CD4-positive, alpha-beta T cell (primary cell): ENCODE measurements at regions of chr1 and their contacts with region 1.

Region 1: DNA sequence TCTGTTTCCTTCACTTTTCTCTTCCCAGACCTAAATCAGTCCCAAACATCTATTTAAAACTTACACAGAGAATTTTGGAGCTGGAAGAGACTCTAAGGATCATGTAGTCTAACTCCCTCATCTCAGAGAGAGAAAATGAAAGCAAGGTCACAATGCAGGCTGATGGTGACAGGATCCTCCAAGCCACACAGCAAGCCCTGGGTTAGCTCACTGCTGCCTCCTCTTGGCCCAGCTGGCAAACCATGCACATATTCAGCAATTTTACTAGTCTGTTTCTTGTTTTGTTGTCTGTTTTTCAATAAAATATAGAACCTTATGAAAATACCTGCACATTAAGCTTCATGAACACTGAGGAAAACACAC is 27.7 kb upstream of the LY9 start:
- DNase-seq: peak; percentile 77 to 93 (median 82)
- ATAC-seq: peak; percentile 95
- H3K4me3 ChIP-seq: peak overlapping the region; percentile 34
- H3K4me3 Mint-ChIP-seq: peak overlapping the region; percentile 72
- H3K27ac ChIP-seq: peak overlapping the region; percentile 56 to 57
- H3K27ac Mint-ChIP-seq: peak overlapping the region; percentile 93
- H3K4me1 ChIP-seq: peaks cover 23% of the 10 kb centered on the region
- H3K4me1 Mint-ChIP-seq: peaks cover 21% of the 10 kb centered on the region
- H3K27me3 ChIP-seq: no peaks in the 10 kb centered on the region
- H3K27me3 Mint-ChIP-seq: no peaks in the 10 kb centered on the region
- CTCF ChIP-seq: peak; percentile 78

Region 2: DNA sequence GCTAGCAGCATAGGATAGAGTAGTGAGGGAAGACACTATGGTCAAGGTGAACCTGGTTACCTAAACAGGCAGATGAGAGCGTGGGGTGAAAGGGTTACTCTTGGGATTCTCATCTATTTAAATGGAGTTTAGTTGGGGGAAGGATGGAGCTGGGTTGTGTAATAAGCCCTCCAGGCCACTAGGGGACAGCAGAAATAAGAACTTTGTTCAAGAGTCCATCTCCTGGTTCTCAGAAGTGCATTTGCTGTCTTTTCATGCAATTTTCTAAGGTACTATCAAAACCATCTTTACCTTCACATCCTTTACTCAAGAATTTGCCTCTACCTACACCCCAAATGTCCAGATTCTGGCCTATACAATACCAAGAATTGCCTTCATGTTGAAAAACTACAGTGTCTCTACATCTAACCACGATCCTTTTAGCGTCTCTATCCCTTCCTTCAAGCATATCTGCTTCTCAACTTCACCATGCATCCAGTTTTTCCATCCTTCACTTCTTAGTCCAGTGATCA is 149.5 kb before region 1 on chr1:
- CTCF ChIA-PET with region 1: no interaction called
- POLR2A ChIA-PET with region 1: no interaction called
- intact Hi-C with region 1: loop called (anchors 5 kb)
- DNase-seq: peak in 8 of 14 experiments; percentile 19 to 79 (median 44)
- ATAC-seq: peak; percentile 67
- H3K4me3 ChIP-seq: no peak overlapping the region
- H3K4me3 Mint-ChIP-seq: no peak overlapping the region
- H3K27ac ChIP-seq: no peak overlapping the region
- H3K27ac Mint-ChIP-seq: peak overlapping the region; percentile 42
- H3K4me1 ChIP-seq: peaks cover 44% of the 10 kb centered on the region
- H3K4me1 Mint-ChIP-seq: peaks cover 84% of the 10 kb centered on the region
- H3K27me3 ChIP-seq: no peaks in the 10 kb centered on the region
- H3K27me3 Mint-ChIP-seq: no peaks in the 10 kb centered on the region
- CTCF ChIP-seq: peak; percentile 80

Region 3: DNA sequence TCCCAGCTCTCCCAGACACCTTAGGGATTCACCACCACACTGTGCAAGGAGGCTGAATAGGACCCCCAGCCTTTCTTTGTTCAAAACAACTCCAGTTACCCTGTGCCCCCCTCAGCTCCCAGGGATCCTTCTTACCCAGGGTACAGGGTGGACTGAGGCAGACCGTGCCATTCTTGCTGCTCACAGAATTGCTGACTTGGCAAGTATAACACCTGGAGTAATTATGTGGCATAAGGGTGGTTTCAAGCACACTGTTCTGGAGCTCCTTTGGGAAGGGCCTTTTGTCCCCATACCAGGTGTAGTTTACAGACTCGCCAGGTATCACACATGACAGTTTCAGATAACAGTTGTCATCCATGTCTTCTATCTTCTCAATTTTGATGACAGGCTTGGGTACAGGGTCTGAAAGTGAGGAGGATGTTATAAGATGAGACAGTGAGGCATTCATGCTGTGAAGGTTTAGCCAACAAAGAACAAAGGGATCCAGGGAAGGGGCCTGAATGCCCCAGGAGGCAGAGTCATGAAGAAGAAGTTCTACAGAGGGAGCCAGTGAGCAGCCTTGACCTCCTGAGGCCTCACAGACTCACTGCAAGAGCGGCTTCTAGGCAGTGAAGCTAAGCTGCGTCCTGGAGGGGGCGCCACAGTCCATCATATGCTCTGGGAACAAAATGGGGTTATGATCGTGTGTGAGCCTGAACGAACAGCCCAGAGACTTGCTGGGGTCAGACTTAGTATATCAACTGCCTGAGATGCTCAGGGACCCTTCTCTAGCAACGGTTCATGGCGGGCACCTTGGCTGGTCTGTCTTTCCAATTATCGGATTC is 87.0 kb before region 1 on chr1:
- CTCF ChIA-PET with region 1: interaction called, 56 read pairs
- POLR2A ChIA-PET with region 1: interaction called, 18 read pairs
- intact Hi-C with region 1: loop called (anchors 1 kb)
- DNase-seq: peak; percentile 83 to 95 (median 88)
- ATAC-seq: peak; percentile 93
- H3K4me3 ChIP-seq: no peak overlapping the region
- H3K4me3 Mint-ChIP-seq: peak overlapping the region; percentile 2
- H3K27ac ChIP-seq: peak overlapping the region; percentile 43 to 53
- H3K27ac Mint-ChIP-seq: peak overlapping the region; percentile 80
- H3K4me1 ChIP-seq: peaks cover 56% of the 10 kb centered on the region
- H3K4me1 Mint-ChIP-seq: peaks cover 52% of the 10 kb centered on the region
- H3K27me3 ChIP-seq: no peaks in the 10 kb centered on the region
- H3K27me3 Mint-ChIP-seq: no peaks in the 10 kb centered on the region
- CTCF ChIP-seq: peak; percentile 82

Region 4: DNA sequence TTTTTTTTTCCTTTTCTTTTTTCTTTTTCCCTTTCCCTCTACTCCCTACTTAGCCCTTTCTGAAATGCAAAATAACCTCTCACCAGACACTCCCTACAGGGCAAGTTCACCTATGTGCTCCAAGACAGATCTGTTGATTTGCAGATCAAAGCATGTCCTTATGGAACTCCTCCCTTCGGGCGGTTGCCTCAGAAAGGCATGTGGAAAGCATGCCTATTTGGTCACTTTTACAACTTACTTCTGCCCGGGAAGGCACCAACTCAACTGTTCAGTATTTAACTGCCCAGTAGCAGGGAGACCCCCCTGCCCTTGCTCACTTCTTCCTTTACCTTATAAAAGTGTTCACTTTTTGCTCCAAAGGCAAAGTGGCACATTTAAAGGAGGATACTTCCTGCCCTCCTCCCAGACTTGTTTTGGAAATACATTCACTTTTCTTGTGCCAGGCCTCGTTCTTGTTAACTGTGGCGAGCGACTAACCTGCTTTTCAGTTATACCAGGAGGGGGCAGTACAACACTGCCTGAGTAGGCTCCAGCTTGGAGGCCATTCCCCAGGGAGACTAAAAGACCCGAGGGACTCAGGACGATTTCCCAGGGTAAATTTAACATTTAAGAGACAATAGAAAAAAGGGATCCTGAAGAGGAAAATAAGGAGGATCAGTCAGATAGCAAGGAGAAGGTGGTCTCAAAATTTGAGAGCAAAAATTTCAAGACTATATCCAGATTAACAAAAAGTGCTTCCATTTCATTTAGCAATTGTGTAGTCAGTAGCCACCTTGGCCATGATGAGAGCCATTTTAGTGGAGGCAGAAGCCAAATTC is 41.6 kb before region 1 on chr1:
- CTCF ChIA-PET with region 1: interaction called, 43 read pairs
- POLR2A ChIA-PET with region 1: interaction called, 5 read pairs
- intact Hi-C with region 1: loop called (anchors 1 to 2 kb)
- DNase-seq: peak; percentile 24 to 87 (median 52)
- ATAC-seq: peak; percentile 89
- H3K4me3 ChIP-seq: no peak overlapping the region
- H3K4me3 Mint-ChIP-seq: no peak overlapping the region
- H3K27ac ChIP-seq: no peak overlapping the region
- H3K27ac Mint-ChIP-seq: no peak overlapping the region
- H3K4me1 ChIP-seq: peaks cover 16% of the 10 kb centered on the region
- H3K4me1 Mint-ChIP-seq: peaks cover 14% of the 10 kb centered on the region
- H3K27me3 ChIP-seq: no peaks in the 10 kb centered on the region
- H3K27me3 Mint-ChIP-seq: no peaks in the 10 kb centered on the region
- CTCF ChIP-seq: peak; percentile 94

Region 5: DNA sequence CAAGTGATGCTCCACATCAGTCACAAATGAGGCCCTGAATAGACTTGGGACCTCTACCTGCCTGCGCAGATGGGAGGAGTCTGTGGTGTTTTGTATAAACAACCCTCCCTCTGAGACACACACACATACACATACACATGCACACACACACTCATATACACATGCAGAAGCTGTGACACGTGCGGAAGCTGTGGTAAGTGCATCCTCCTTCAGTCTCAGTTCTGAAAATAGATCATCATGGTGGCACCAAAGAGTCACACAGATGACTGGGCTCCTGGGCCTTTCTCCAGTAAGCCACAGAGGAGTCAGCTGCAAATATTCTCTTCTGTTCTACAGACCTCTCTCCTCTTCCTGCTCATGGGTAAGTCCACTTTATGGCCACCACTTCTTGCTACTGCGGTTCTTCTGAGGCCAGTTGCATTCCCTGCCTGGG is 27.7 kb after region 1 on chr1 and contains the start of gene LY9:
- CTCF ChIA-PET with region 1: interaction called, 5 read pairs
- POLR2A ChIA-PET with region 1: interaction called, 21 read pairs
- intact Hi-C with region 1: no loop called
- DNase-seq: peak; percentile 64 to 97 (median 72)
- ATAC-seq: peak; percentile 88
- H3K4me3 ChIP-seq: peak within 1 kb of the TSS; percentile 74
- H3K4me3 Mint-ChIP-seq: peak within 1 kb of the TSS; percentile 97
- H3K27ac ChIP-seq: peak within 1 kb of the TSS; percentile 73 to 88
- H3K27ac Mint-ChIP-seq: peak within 1 kb of the TSS; percentile 92
- H3K4me1 ChIP-seq: peaks cover 37% of the 10 kb centered on the region
- H3K4me1 Mint-ChIP-seq: peaks cover 62% of the 10 kb centered on the region
- H3K27me3 ChIP-seq: no peaks in the 10 kb centered on the region
- H3K27me3 Mint-ChIP-seq: no peaks in the 10 kb centered on the region
- CTCF ChIP-seq: no peak
- total RNA-seq, gene LY9: 124 TPM

Region 6: DNA sequence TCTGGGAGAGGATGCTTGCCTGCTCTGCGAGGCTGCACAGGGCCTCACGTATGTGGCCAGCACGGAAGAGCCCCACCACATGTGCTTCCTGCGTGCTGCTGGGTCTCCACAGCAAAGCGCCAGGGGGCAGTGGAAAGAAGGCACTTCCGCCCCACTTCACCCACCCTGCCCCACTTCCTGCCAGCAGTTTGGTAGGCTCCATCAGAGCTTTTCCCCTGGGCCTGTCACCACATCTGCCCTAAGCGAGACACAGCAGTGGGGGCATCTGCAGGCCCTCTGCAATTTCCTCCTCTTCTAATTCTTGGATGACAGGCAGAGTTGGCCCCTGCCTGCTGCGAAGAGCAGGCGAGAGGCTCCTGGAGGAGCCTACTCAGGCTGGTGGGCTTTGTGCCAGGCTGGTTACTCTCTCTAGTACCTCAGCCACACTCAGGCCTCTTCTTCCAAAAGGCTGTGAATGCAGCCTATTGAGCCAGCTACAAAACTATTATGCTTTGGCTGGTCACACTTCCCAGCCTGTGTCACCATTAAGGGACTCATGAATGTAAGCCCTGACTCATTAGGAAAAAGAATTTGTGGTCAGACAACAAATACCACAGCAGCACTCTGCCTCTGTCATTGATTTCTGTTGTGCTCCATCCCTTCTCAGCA is 69.4 kb after region 1 on chr1:
- CTCF ChIA-PET with region 1: interaction called, 9 read pairs
- POLR2A ChIA-PET with region 1: interaction called, 8 read pairs
- intact Hi-C with region 1: loop called in 1 of 2 experiments (anchors 5 kb)
- DNase-seq: peak; percentile 68 to 95 (median 82)
- ATAC-seq: peak; percentile 96
- H3K4me3 ChIP-seq: peak overlapping the region; percentile 23
- H3K4me3 Mint-ChIP-seq: peak overlapping the region; percentile 79
- H3K27ac ChIP-seq: peak overlapping the region; percentile 76 to 79
- H3K27ac Mint-ChIP-seq: peak overlapping the region; percentile 96
- H3K4me1 ChIP-seq: peaks cover 55% of the 10 kb centered on the region
- H3K4me1 Mint-ChIP-seq: peaks cover 73% of the 10 kb centered on the region
- H3K27me3 ChIP-seq: no peaks in the 10 kb centered on the region
- H3K27me3 Mint-ChIP-seq: no peaks in the 10 kb centered on the region
- CTCF ChIP-seq: peak; percentile 65